CD14-positive monocyte (primary cell): ENCODE measurements at regions of chr5 and their contacts with region 1.

Region 1: DNA sequence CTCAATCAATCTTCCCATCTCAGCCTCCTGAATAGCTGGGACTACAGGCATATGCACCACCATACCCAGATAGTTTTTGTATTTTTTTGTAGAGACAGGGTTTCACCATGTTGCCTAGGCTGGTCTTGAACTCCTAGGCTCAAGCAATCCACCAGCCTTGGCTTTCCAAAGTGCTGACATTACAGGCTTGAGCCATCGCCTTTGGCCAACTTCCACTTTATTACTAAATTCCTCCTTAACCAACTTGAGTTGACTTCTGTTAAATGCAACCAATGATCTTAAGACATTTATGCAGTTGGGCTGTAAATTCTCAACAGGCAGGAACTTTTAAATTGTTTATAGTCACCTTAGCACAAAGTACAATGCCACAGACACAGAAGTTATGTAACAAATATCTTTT is 2.8 kb downstream of the LARS1 start:
- DNase-seq: no peak
- H3K4me3 ChIP-seq: no peak overlapping the region
- H3K4me3 Mint-ChIP-seq: no peak overlapping the region
- H3K27ac ChIP-seq: no peak overlapping the region
- H3K27ac Mint-ChIP-seq: no peak overlapping the region
- H3K4me1 ChIP-seq: peaks cover 14 to 26% of the 10 kb centered on the region in 2 donors
- H3K4me1 Mint-ChIP-seq: peaks cover 17% of the 10 kb centered on the region
- H3K27me3 ChIP-seq: no peaks in the 10 kb centered on the region
- H3K27me3 Mint-ChIP-seq: peaks cover 0 to 2% (median 0%) of the 10 kb centered on the region in 3 donors
- CTCF ChIP-seq: no peak

Region 2: DNA sequence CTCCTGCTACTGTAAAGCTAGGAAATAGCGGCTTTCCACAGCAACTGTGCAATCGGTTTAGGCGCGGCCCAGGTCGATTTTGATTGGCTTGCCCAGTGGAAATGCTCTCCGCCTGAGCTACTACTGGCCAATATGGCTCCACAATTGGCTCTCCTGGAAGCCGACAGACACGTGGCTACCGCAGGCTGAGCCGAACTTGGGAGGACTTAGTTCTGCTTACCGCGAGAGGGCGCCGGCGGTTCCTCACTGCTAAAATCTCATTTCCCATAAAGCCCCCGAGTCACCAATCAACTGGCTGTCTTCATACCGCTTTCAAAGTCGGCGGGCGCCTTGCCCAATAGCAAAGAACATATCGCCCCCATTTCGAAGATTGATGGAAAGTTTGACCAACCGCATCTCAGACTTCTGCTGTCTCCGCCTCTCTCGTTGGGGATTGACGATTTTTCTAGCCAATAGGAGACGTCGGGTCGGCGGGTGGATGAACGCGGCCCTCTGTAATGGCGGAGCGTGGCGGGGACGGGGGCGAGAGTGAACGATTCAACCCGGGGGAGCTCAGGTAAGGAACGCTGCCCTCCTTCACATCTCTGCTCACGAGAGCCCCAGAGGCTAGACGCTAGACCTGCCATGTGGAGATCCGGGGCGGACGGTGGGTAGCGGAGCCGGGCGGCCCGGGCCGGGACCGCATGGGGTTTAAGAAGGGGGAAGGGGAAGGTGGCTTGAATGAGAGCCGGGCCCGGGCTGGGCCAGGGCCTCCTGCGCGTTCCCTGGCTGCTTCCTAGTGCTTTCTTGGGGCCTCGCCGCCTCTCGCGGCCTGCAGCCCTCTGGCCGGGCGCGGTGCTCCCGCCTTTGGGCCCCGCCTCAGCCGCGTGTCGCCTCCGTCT is 267.4 kb after region 1 on chr5 and contains the start of gene TCERG1:
- intact Hi-C with region 1: loop called in 1 of 2 experiments (anchors 5 kb)
- DNase-seq: peak; percentile 99 to 100 (median 99)
- H3K4me3 ChIP-seq: peak within 1 kb of the TSS; percentile 88 to 94 (median 90)
- H3K4me3 Mint-ChIP-seq: peak within 1 kb of the TSS; percentile 95 to 98
- H3K27ac ChIP-seq: peak within 1 kb of the TSS; percentile 92 to 96
- H3K27ac Mint-ChIP-seq: peak within 1 kb of the TSS; percentile 96 to 100 (median 97)
- H3K4me1 ChIP-seq: peaks cover 19 to 32% of the 10 kb centered on the region in 2 donors
- H3K4me1 Mint-ChIP-seq: peaks cover 35% of the 10 kb centered on the region
- H3K27me3 ChIP-seq: no peaks in the 10 kb centered on the region
- H3K27me3 Mint-ChIP-seq: peaks cover 0 to 2% (median 2%) of the 10 kb centered on the region in 3 donors
- CTCF ChIP-seq: peak; percentile 79
- polyA plus RNA-seq, gene TCERG1: 11.6 to 37.3 (median 18.0) TPM